ENCODE measurements at regions of chr7 and their contacts with region 1.

Region 1: DNA sequence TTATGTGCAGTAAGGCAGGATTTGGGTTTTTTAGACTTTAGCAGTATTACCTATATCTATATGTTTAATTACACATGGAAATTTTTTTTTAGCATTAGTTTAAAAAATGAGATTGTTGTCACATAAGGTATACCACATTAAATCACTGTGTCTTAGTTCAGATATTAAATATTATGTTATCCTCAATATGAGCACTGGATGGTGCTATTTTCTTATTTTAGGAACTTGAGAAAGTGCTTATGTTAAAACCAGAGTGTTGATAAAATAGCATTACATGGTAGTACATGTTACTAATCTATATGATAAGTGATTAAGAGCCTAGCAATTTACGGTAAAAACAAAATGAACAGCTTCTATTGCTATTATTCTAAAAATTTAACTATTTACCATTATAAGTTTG is 28.8 kb downstream of the MIOS start:
- DNase-seq: no peak
- H3K4me3 ChIP-seq: no peak overlapping the region
- H3K27ac ChIP-seq: no peak overlapping the region
- H3K27me3 ChIP-seq: no peaks in the 10 kb centered on the region
- CTCF ChIP-seq: peak; percentile 43

Region 2: GRCh38 chr7:7385421-7385820 is 210.0 kb before region 1 on chr7:
- CTCF ChIA-PET with region 1: no interaction called
- POLR2A ChIA-PET with region 1: no interaction called
- DNase-seq: no peak
- H3K4me3 ChIP-seq: no peak overlapping the region
- H3K27ac ChIP-seq: no peak overlapping the region
- H3K27me3 ChIP-seq: no peaks in the 10 kb centered on the region
- CTCF ChIP-seq: no peak

Region 3: DNA sequence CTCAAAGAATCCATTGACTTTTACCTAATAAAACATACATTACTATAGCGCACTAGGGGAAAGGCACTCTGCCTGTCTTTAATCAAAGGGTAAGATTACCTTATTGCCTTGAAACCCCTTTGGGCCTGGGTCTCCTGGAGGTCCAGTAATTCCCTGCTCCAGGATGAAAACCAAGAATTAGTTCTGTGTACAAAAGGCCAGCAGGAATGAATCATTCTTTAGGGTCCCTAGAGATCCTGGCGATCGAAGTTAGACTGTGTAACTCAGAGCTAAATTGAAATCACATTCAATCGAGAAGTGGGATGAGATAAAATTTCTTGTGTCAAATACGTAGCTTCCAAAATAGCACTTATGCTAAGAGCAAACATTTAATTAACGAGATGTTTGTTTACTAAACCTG is 89.5 kb before region 1 on chr7:
- CTCF ChIA-PET with region 1: no interaction called
- POLR2A ChIA-PET with region 1: no interaction called
- DNase-seq: no peak
- H3K4me3 ChIP-seq: no peak overlapping the region
- H3K27ac ChIP-seq: no peak overlapping the region
- H3K27me3 ChIP-seq: no peaks in the 10 kb centered on the region
- CTCF ChIP-seq: no peak

Region 4: GRCh38 chr7:7566651-7567611 is 28.5 kb before region 1 on chr7 and contains the start of gene MIOS:
- CTCF ChIA-PET with region 1: no interaction called
- POLR2A ChIA-PET with region 1: no interaction called
- DNase-seq: peak; percentile 26
- H3K4me3 ChIP-seq: peak within 1 kb of the TSS; percentile 74
- H3K27ac ChIP-seq: no peak within 1 kb of the TSS
- H3K27me3 ChIP-seq: no peaks in the 10 kb centered on the region
- CTCF ChIP-seq: no peak
- polyA plus RNA-seq, gene MIOS: 19.0 and 26.6 TPM in 2 replicates

Region 5: DNA sequence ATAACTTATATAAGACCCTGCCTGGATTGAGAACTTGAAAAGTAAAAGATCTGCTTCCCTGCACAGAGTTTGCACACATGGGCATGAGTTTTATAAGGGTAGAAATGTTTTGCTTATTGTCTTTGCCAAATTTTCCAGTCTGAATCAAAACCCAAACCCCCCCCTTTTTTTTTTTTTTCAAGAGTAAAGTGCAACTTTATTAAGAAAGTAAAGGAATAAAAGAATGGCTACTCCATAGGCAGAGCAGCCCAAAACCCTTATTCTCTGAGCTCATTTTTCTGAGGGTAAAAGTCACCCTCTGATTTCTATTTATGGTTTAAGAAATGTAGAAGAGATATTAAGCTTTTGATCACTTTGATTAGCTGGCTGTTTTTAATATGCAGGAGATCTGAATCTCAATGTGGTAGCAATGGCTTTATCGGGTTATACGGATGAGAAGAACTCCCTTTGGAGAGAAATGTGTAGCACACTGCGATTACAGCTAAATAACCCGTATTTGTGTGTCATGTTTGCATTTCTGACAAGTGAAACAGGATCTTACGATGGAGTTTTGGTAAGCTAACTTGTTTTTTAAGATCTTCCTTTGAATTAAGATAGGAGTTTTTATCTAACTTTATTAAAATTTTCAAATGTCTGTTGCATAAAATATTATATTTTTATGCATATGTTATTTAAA is 10.1 kb before region 1 on chr7:
- CTCF ChIA-PET with region 1: interaction called, 20 read pairs
- POLR2A ChIA-PET with region 1: no interaction called
- DNase-seq: no peak
- H3K4me3 ChIP-seq: no peak overlapping the region
- H3K27ac ChIP-seq: no peak overlapping the region
- H3K27me3 ChIP-seq: no peaks in the 10 kb centered on the region
- CTCF ChIP-seq: no peak

Region 6: DNA sequence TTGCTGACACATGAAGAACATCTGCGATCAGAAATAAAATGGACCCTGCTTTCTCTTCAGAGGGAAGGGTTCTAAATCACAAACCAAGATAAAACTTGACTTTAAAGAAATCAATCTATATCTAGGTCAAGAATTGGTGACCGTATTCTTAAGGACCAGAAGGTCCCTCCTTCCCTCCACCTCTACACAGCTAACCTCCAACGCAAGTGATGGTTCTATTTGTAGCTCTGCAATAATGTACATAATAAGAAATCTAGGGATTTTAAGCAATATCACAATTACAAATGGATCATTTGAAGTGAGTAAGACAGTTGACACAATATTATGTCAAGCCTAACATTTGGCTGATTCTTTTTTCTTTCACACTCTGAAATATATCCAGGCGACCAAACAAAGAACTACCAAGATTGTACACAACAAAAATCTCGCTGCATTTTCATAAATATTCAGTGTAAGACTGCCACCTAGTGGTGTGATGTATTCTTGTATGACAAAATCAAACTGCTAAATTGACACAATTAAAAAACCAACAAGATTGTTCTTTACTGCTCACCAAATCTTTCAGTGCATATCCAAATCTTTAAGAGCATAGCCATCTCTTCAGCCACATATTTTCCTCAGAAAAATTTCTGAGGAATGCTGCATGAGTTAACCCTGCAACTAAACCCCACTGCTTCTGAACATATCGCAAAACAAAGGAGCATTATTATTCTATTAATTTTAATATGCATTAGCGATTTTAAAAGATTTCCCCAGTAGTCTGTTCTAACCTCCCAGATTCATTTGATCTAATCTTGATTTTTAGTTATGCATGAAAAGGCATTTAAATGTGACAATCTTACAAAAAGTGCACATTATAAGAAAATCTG is 622.0 kb after region 1 on chr7:
- CTCF ChIA-PET with region 1: interaction called, 56 read pairs
- POLR2A ChIA-PET with region 1: no interaction called
- DNase-seq: peak; percentile 48
- H3K4me3 ChIP-seq: no peak overlapping the region
- H3K27ac ChIP-seq: no peak overlapping the region
- H3K27me3 ChIP-seq: no peaks in the 10 kb centered on the region
- CTCF ChIP-seq: peak; percentile 58